CD8-positive, alpha-beta T cell (primary cell): ENCODE measurements at regions of chr1 and their contacts with region 1.

Region 1: GRCh38 chr1:171166361-171166760 is 18.7 kb upstream of the FMO2 start:
- DNase-seq: no peak
- ATAC-seq: no peak
- H3K4me3 ChIP-seq: no peak overlapping the region
- H3K4me3 Mint-ChIP-seq: no peak overlapping the region
- H3K27ac ChIP-seq: no peak overlapping the region
- H3K27ac Mint-ChIP-seq: no peak overlapping the region
- H3K4me1 ChIP-seq: no peaks in the 10 kb centered on the region
- H3K4me1 Mint-ChIP-seq: no peaks in the 10 kb centered on the region
- H3K27me3 ChIP-seq: no peaks in the 10 kb centered on the region
- H3K27me3 Mint-ChIP-seq: peaks cover 14% of the 10 kb centered on the region
- CTCF ChIP-seq: no peak

Region 2: GRCh38 chr1:171138980-171139379 is 27.4 kb before region 1 on chr1:
- CTCF ChIA-PET with region 1: no interaction called
- POLR2A ChIA-PET with region 1: no interaction called
- intact Hi-C with region 1: loop called in 1 of 2 experiments (anchors 1 kb)
- DNase-seq: no peak
- ATAC-seq: no peak
- H3K4me3 ChIP-seq: no peak overlapping the region
- H3K4me3 Mint-ChIP-seq: no peak overlapping the region
- H3K27ac ChIP-seq: no peak overlapping the region
- H3K27ac Mint-ChIP-seq: no peak overlapping the region
- H3K4me1 ChIP-seq: no peaks in the 10 kb centered on the region
- H3K4me1 Mint-ChIP-seq: no peaks in the 10 kb centered on the region
- H3K27me3 ChIP-seq: no peaks in the 10 kb centered on the region
- H3K27me3 Mint-ChIP-seq: peaks cover 5% of the 10 kb centered on the region
- CTCF ChIP-seq: no peak

Region 3: DNA sequence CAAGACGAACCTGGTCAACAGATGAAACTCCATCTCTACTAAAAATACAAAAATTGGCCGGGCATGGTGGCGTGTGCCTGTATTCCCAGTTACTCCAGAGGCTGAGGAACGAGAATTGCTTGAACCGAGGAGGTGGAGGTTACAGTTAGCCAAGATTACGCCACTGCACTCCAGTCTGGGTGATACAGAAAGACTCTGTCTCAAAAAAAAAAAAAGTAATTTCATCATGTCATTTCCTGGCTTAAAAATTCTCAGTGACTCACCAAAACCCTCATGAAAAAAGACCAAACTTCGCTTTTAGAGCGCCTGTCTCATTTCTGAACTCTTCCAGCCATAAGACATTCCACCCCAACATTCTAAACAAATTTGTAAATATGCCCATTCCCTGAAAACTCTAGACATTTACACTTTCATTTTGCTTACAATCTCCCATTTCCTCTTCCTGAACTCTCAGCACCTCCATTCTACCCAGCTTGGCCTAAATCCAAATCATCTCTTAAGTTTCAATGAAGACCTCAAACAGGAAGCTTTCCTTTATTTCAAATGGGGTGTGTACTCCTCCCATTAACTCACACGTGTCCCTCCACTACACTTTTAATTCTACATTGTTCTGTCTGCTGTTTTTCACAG is 268.5 kb after region 1 on chr1:
- CTCF ChIA-PET with region 1: no interaction called
- POLR2A ChIA-PET with region 1: no interaction called
- intact Hi-C with region 1: no loop called
- DNase-seq: peak in 3 of 9 experiments; percentile 11 to 25 (median 13)
- ATAC-seq: peak; percentile 38
- H3K4me3 ChIP-seq: no peak overlapping the region
- H3K4me3 Mint-ChIP-seq: peak overlapping the region; percentile 70
- H3K27ac ChIP-seq: peak overlapping the region in 1 of 2 experiments; percentile 32
- H3K27ac Mint-ChIP-seq: peak overlapping the region; percentile 84
- H3K4me1 ChIP-seq: peaks cover 11% of the 10 kb centered on the region
- H3K4me1 Mint-ChIP-seq: peaks cover 12% of the 10 kb centered on the region
- H3K27me3 ChIP-seq: no peaks in the 10 kb centered on the region
- H3K27me3 Mint-ChIP-seq: peaks cover 4% of the 10 kb centered on the region
- CTCF ChIP-seq: no peak